ENCODE measurements at regions of chr2 and their contacts with region 1.

Region 1: DNA sequence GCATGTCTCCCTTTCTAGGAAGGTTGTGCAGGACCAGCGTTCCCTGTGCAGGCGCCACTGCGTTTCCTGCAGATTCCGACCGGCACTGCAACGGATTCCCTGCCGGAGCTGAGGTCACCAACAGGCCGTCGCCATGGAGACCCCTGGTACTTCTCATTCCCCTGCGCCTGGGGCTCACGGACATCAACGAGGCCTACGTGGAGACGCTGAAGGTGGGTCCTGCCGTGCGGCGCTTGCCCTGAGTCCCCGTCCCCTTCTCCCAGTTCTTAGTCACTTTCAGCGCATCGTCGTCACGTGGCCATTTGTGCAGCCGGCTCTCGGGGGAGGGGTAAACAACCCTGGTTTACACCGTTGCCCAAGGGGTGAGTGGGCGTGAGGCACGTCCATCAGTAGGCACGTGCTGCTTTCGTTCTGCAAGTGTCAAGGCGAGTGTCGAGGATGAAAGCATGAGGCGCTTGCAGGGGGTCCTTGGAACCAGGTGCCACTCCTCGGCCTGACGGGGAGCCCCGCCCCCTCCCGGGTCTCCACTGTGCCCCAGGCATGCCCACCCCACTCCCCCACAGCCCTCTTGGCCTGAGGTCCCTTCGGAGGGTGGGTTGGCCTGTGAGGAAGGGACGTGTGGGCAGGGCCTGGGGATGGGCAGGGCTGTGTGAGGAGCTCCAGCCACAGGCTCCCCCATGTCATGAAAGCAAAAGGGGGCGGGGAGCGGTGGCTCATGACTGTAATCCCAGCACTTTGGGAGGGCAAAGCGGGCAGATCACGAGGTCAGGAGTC is 19.8 kb downstream of the DTYMK start:
- DNase-seq: peak; percentile 23
- ATAC-seq: no peak
- H3K4me3 ChIP-seq: no peak overlapping the region
- H3K27ac ChIP-seq: no peak overlapping the region
- H3K4me1 ChIP-seq: peaks cover 15% of the 10 kb centered on the region
- H3K27me3 ChIP-seq: no peaks in the 10 kb centered on the region
- CTCF ChIP-seq: no peak
- POLR2A ChIP-seq: no peak
- RAD21 ChIP-seq: no peak

Region 2: GRCh38 chr2:241702132-241703031 is 35.6 kb after region 1 on chr2:
- CTCF ChIA-PET with region 1: no interaction called
- POLR2A ChIA-PET with region 1: no interaction called
- dilution Hi-C with region 1: no loop called
- in situ Hi-C with region 1: no loop called
- intact Hi-C with region 1: loop called (anchors 1 kb)
- DNase-seq: peak; percentile 75
- ATAC-seq: peak; percentile 89
- H3K4me3 ChIP-seq: peak overlapping the region; percentile 80
- H3K27ac ChIP-seq: peak overlapping the region; percentile 46; the same call in 1 of the 2 replicates
- H3K4me1 ChIP-seq: peaks cover 4% of the 10 kb centered on the region; the same call in 1 of the 2 replicates
- H3K27me3 ChIP-seq: no peaks in the 10 kb centered on the region
- CTCF ChIP-seq: no peak; the same call in 1 of the 2 replicates
- POLR2A ChIP-seq: no peak
- RAD21 ChIP-seq: no peak

Region 3: GRCh38 chr2:241734467-241735208 is 67.8 kb after region 1 on chr2 and contains the start of gene D2HGDH:
- CTCF ChIA-PET with region 1: no interaction called
- POLR2A ChIA-PET with region 1: no interaction called
- dilution Hi-C with region 1: no loop called
- in situ Hi-C with region 1: no loop called
- intact Hi-C with region 1: loop called (anchors 2 kb)
- DNase-seq: peak; percentile 67
- ATAC-seq: peak; percentile 97
- H3K4me3 ChIP-seq: peak within 1 kb of the TSS; percentile 98
- H3K27ac ChIP-seq: peak within 1 kb of the TSS; percentile 92
- H3K4me1 ChIP-seq: peaks cover 3% of the 10 kb centered on the region
- H3K27me3 ChIP-seq: no peaks in the 10 kb centered on the region
- CTCF ChIP-seq: no peak
- POLR2A ChIP-seq: peak; percentile 47
- RAD21 ChIP-seq: no peak
- total RNA-seq, gene D2HGDH: 6.3 and 8.3 TPM in 2 replicates

Region 4: DNA sequence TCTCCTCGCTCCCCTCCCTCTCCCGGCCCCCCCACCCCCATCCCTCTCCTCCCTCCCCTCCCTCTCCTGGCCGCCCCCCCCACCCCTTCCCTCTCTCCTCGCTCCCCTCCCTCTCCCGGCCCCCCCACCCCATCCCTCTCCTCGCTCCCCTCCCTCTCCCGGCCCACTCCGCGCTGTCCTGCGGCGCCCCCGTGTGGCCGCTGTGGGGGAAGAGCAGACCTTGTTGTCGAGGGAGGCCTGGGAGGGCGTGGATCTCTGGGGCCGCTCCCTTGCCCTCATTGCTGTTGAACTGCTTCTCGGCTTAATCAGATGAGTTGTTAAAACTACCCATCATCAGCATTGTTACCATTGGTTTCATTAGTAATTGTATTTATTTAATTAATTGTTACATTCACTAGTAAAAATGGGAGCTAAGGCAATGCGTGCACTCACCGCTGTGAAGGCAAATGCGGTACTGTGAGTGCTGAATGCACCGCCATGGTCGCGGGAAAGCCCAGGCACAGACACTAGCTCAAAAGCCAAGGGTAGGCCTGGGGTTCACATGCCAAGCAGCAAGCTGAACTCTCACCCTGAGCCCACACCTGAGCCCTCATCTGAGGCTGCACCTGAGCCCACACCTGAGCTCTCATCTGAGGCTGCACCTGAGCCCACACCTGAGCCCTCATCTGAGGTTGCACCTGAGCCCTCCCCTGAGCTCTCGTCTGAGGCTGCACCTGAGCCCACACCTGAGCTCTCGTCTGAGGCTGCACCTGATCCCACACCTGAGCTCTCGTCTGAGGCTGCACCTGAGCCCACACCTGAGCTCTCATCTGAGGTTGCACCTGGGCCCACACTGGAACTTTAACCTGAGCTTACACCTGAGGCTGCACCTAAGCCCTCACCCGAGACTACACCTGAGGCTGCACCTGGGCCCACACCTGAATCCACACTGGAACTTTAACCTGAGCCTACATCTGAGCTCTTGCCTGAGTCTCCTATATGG is 211.5 kb after region 1 on chr2:
- CTCF ChIA-PET with region 1: interaction called, 7 read pairs
- POLR2A ChIA-PET with region 1: no interaction called
- dilution Hi-C with region 1: no loop called
- in situ Hi-C with region 1: loop called (anchors 5 kb)
- intact Hi-C with region 1: loop called (anchors 2 kb)
- DNase-seq: peak; percentile 54
- ATAC-seq: peak; percentile 66
- H3K4me3 ChIP-seq: no peak overlapping the region
- H3K27ac ChIP-seq: no peak overlapping the region
- H3K4me1 ChIP-seq: no peaks in the 10 kb centered on the region
- H3K27me3 ChIP-seq: no peaks in the 10 kb centered on the region
- CTCF ChIP-seq: peak; percentile 73
- POLR2A ChIP-seq: no peak
- RAD21 ChIP-seq: peak; percentile 77